ENCODE measurements at regions of chr9 and their contacts with region 1.

Region 1: DNA sequence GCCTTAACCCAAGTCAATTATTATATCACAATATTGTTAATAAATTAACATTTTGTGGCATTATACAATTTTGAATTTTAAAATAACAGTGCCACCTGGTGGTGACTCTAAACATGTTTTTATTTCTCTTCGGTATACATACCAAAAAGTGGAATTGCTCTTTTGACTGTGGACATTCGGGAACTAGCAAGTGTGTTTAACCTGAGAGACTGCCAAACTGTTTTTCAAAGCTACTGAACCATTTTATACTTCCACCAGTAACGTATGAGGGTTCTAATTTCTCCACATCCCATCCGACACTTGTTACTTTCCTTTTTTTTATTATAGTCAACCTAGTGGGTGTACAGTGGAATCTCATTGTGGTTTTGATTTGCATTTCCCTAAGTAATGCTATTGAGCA is 18.3 kb upstream of the HSDL2 start:
- DNase-seq: peak in 2 of 5 donors; percentile 28 to 41
- H3K4me3 ChIP-seq: no peak overlapping the region
- H3K4me3 Mint-ChIP-seq: no peak overlapping the region
- H3K27ac ChIP-seq: no peak overlapping the region
- H3K27ac Mint-ChIP-seq: no peak overlapping the region
- H3K4me1 ChIP-seq: no peaks in the 10 kb centered on the region
- H3K4me1 Mint-ChIP-seq: peaks cover 2 to 4% (median 3%) of the 10 kb centered on the region in 3 donors
- H3K27me3 ChIP-seq: no peaks in the 10 kb centered on the region
- H3K27me3 Mint-ChIP-seq: peaks cover 8 to 12% of the 10 kb centered on the region in 2 donors

Region 2: DNA sequence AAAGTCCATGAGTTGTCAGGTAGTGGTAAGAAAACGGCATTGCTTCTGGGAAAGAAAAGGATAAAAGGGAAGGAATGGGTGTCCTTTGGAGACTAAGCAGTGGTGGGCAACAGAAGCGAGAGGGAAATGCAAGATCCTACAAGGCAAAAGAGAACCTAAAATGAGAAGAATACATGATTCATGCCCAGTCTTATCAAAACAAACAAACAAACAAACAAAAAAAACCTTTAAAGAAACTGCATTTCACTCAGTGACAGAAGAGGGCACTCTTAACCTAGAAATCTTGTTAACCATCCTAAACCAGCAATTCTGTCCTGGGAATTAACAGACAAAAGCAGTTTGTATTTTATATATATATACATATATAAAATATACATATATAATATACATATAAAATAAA is 275.0 kb before region 1 on chr9:
- CTCF ChIA-PET with region 1: interaction called, 27 read pairs
- POLR2A ChIA-PET with region 1: no interaction called
- DNase-seq: no peak
- H3K4me3 ChIP-seq: no peak overlapping the region
- H3K4me3 Mint-ChIP-seq: no peak overlapping the region
- H3K27ac ChIP-seq: no peak overlapping the region
- H3K27ac Mint-ChIP-seq: no peak overlapping the region
- H3K4me1 ChIP-seq: no peaks in the 10 kb centered on the region
- H3K4me1 Mint-ChIP-seq: no peaks in the 10 kb centered on the region
- H3K27me3 ChIP-seq: no peaks in the 10 kb centered on the region
- H3K27me3 Mint-ChIP-seq: peaks cover 0 to 2% of the 10 kb centered on the region in 2 donors

Region 3: GRCh38 chr9:112097712-112098688 is 263.6 kb before region 1 on chr9:
- CTCF ChIA-PET with region 1: interaction called, 29 read pairs
- POLR2A ChIA-PET with region 1: no interaction called
- DNase-seq: peak; percentile 49 to 74 (median 59)
- H3K4me3 ChIP-seq: no peak overlapping the region
- H3K4me3 Mint-ChIP-seq: no peak overlapping the region
- H3K27ac ChIP-seq: no peak overlapping the region
- H3K27ac Mint-ChIP-seq: peak overlapping the region in 4 of 8 donors; percentile 13 to 67 (median 50)
- H3K4me1 ChIP-seq: peaks cover 9% of the 10 kb centered on the region
- H3K4me1 Mint-ChIP-seq: peaks cover 19 to 34% (median 20%) of the 10 kb centered on the region in 3 donors
- H3K27me3 ChIP-seq: no peaks in the 10 kb centered on the region
- H3K27me3 Mint-ChIP-seq: no peaks in the 10 kb centered on the region

Region 4: GRCh38 chr9:112112941-112113681 is 248.5 kb before region 1 on chr9:
- CTCF ChIA-PET with region 1: interaction called, 22 read pairs
- POLR2A ChIA-PET with region 1: no interaction called
- DNase-seq: peak in 1 of 5 donors; percentile 10
- H3K4me3 ChIP-seq: no peak overlapping the region
- H3K4me3 Mint-ChIP-seq: no peak overlapping the region
- H3K27ac ChIP-seq: no peak overlapping the region
- H3K27ac Mint-ChIP-seq: peak overlapping the region in 4 of 8 donors; percentile 17 to 54 (median 27)
- H3K4me1 ChIP-seq: no peaks in the 10 kb centered on the region
- H3K4me1 Mint-ChIP-seq: no peaks in the 10 kb centered on the region
- H3K27me3 ChIP-seq: no peaks in the 10 kb centered on the region
- H3K27me3 Mint-ChIP-seq: no peaks in the 10 kb centered on the region

Region 5: GRCh38 chr9:112379177-112380101 is 17.8 kb after region 1 on chr9:
- CTCF ChIA-PET with region 1: interaction called, 16 read pairs
- POLR2A ChIA-PET with region 1: no interaction called
- DNase-seq: peak; percentile 93 to 99 (median 97)
- H3K4me3 ChIP-seq: peak overlapping the region; percentile 88
- H3K4me3 Mint-ChIP-seq: peak overlapping the region; percentile 97 to 99 (median 99)
- H3K27ac ChIP-seq: peak overlapping the region; percentile 87
- H3K27ac Mint-ChIP-seq: peak overlapping the region; percentile 92 to 99 (median 98)
- H3K4me1 ChIP-seq: peaks cover 20% of the 10 kb centered on the region
- H3K4me1 Mint-ChIP-seq: peaks cover 35 to 64% (median 49%) of the 10 kb centered on the region in 3 donors
- H3K27me3 ChIP-seq: no peaks in the 10 kb centered on the region
- H3K27me3 Mint-ChIP-seq: no peaks in the 10 kb centered on the region

Measured in CD8-positive, alpha-beta memory T cell (primary cell).